Activated naive CD4-positive, alpha-beta T cell treated with anti-CD3 and anti-CD28 coated beads, Interleukin-2, amount 10 ng/mL, durations not matched to agents 7 days and 5 days (primary cell): ENCODE measurements at regions of chr18 and their contacts with region 1.

Region 1: GRCh38 chr18:623761-624620 is 27.2 kb downstream of the CLUL1 start:
- DNase-seq: peak; percentile 79
- H3K4me3 Mint-ChIP-seq: no peak overlapping the region
- H3K27ac Mint-ChIP-seq: no peak overlapping the region
- H3K4me1 Mint-ChIP-seq: no peaks in the 10 kb centered on the region
- H3K27me3 Mint-ChIP-seq: peaks cover 36% of the 10 kb centered on the region

Region 2: DNA sequence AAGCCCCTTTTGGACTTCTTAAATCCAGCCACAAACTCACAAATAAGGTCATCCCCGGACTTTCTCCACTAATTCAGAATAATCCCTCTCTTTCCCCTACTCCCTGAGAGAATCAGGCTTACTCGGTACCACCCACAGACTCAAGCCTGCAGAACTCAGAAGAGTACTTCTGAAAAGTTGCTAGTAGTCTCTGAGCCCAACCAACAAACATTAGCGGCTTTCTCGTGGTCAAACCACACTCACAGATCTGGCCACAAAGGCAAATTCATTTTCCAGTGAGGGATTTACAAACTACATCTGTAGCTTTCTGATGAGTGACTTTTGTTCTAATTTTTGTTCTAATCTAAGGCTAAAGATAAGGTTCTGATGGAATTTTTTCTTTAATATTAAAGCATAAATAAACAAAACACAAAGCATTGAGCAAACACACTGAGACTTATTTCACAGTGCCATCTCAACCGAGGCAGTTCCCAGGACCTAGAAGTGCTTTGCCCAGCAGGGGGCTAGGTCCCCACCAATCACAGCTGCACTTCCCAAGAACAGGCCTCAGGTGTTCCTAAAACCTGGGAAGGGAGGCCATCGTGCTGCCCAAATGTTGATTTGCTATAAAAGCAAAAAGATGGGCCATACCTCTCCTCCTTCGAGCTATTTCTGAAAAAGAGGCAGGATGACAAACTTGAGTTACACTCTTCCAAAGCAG is 234.2 kb before region 1 on chr18:
- CTCF ChIA-PET with region 1: no interaction called
- DNase-seq: no peak
- H3K4me3 Mint-ChIP-seq: no peak overlapping the region
- H3K27ac Mint-ChIP-seq: no peak overlapping the region
- H3K4me1 Mint-ChIP-seq: no peaks in the 10 kb centered on the region
- H3K27me3 Mint-ChIP-seq: peaks cover 10% of the 10 kb centered on the region

Region 3: GRCh38 chr18:634551-635045 is 10.6 kb after region 1 on chr18:
- CTCF ChIA-PET with region 1: interaction called, 12 read pairs
- DNase-seq: no peak
- H3K4me3 Mint-ChIP-seq: no peak overlapping the region
- H3K27ac Mint-ChIP-seq: no peak overlapping the region
- H3K4me1 Mint-ChIP-seq: no peaks in the 10 kb centered on the region
- H3K27me3 Mint-ChIP-seq: peaks cover 29% of the 10 kb centered on the region

Region 4: GRCh38 chr18:650428-650858 is 26.5 kb after region 1 on chr18:
- CTCF ChIA-PET with region 1: interaction called, 10 read pairs
- DNase-seq: peak; percentile 73
- H3K4me3 Mint-ChIP-seq: peak overlapping the region; percentile 14
- H3K27ac Mint-ChIP-seq: no peak overlapping the region
- H3K4me1 Mint-ChIP-seq: peaks cover 19% of the 10 kb centered on the region
- H3K27me3 Mint-ChIP-seq: peaks cover 15% of the 10 kb centered on the region

Region 5: GRCh38 chr18:658001-658946 is 34.3 kb after region 1 on chr18:
- CTCF ChIA-PET with region 1: interaction called, 18 read pairs
- DNase-seq: peak; percentile 89
- H3K4me3 Mint-ChIP-seq: peak overlapping the region; percentile 93
- H3K27ac Mint-ChIP-seq: peak overlapping the region; percentile 91
- H3K4me1 Mint-ChIP-seq: peaks cover 48% of the 10 kb centered on the region
- H3K27me3 Mint-ChIP-seq: peaks cover 5% of the 10 kb centered on the region